MCF 10A (cell line): ENCODE measurements at regions of chr5 and their contacts with region 1.

Region 1: DNA sequence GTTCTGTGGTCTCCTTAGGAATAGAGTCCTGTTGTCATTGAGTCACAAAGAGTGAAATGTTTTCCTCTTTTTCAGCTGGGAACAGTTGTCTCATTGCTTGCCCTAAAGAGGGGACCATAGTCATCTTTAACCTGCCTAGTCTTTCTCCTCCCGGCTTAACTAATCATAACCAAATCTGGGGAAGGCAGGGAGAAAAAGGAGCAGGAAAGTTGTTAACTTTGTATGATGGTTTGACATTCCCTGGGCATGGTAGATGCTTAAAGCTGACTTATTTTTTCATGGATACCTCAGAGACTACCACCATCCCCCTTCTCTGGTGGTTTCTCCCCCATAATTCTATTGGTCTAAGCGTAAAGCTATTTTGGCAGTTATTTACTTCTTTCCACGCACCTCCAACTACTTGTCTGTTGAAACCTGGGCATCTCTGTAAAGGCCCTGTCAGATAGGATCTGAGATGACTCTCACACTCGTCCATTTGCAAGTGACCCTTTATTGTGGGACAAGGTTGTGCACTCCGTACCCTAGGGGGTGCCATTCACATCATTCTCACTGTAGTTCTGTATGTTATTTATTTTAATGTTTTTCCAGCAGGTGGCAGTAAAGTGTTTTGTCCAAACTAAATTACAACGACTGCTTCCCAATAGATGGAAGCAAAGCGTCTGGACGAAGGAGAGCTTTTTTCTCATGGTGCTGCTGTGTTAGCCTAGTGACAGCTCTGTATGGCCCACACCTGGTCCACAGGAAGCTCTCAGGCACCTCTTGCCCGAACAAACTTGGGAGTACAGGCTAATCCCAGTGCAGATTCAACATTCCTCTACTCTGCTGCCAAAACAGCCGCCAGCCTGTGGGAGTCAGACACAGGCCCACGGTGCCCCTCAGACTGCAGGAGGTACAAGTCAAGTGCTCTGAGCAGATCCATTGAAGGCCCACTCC is 3.0 kb upstream of the FAM13B start:
- DNase-seq: peak; percentile 96
- H3K4me3 Mint-ChIP-seq: no peak overlapping the region
- H3K27ac Mint-ChIP-seq: peak overlapping the region; percentile 4
- H3K4me1 Mint-ChIP-seq: peaks cover 26% of the 10 kb centered on the region
- H3K27me3 Mint-ChIP-seq: no peaks in the 10 kb centered on the region
- CTCF ChIP-seq: peak; percentile 93

Region 2: GRCh38 chr5:137778772-137779564 is 256.9 kb before region 1 on chr5:
- CTCF ChIA-PET with region 1: interaction called, 75 read pairs
- POLR2A ChIA-PET with region 1: interaction called, 4 read pairs
- intact Hi-C with region 1: loop called (anchors 1 kb)
- DNase-seq: peak; percentile 82
- H3K4me3 Mint-ChIP-seq: no peak overlapping the region
- H3K27ac Mint-ChIP-seq: no peak overlapping the region
- H3K4me1 Mint-ChIP-seq: no peaks in the 10 kb centered on the region
- H3K27me3 Mint-ChIP-seq: peaks cover 24% of the 10 kb centered on the region
- CTCF ChIP-seq: peak; percentile 86

Region 3: DNA sequence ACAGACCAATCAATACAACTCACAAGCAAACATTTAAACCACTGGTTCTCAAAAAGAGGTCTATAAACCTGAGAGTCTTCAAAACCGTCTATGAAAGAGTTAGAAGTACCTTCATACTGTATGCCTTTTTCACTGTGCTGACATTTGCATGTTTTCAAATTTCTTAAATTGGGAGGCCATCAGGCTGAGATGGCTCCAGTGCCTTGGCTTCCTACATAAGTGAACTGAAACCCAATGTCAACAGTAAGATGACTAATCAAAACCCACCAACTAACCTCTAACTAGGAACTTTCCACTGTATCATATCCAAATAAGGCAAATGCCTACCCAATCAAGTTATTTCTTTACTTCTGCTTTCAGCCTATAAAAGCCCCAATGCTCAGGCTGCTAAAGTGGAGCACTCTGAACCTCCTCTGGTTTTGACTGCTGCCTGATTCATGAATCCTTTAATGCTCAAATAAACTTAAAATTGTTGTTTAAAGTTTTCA is 38.1 kb before region 1 on chr5:
- CTCF ChIA-PET with region 1: interaction called, 10 read pairs
- POLR2A ChIA-PET with region 1: interaction called, 6 read pairs
- intact Hi-C with region 1: no loop called
- DNase-seq: peak; percentile 18
- H3K4me3 Mint-ChIP-seq: no peak overlapping the region
- H3K27ac Mint-ChIP-seq: no peak overlapping the region
- H3K4me1 Mint-ChIP-seq: peaks cover 26% of the 10 kb centered on the region
- H3K27me3 Mint-ChIP-seq: no peaks in the 10 kb centered on the region
- CTCF ChIP-seq: no peak

Region 4: DNA sequence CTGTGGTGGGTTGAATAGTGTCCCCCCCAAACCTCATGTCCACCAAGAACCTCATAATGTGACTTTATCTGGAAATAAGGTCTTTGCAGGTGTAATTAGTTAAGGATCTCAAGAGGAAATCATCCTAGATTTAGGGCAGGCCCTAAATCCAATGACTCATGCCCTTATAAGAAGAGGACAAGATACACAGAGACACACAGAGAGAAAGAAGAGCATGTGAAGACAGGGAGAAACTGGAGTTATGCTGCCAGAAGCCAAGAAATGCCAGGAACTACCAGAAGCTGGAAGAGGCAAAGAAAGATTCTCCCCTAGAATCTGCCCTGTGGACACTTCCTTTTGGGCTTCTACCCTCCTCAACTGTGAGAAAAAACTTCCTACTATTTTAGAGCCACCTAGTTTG is 11.8 kb before region 1 on chr5:
- CTCF ChIA-PET with region 1: interaction called, 28 read pairs
- POLR2A ChIA-PET with region 1: interaction called, 12 read pairs
- intact Hi-C with region 1: no loop called
- DNase-seq: peak; percentile 27
- H3K4me3 Mint-ChIP-seq: no peak overlapping the region
- H3K27ac Mint-ChIP-seq: peak overlapping the region; percentile 68
- H3K4me1 Mint-ChIP-seq: peaks cover 38% of the 10 kb centered on the region
- H3K27me3 Mint-ChIP-seq: no peaks in the 10 kb centered on the region
- CTCF ChIP-seq: no peak

Region 5: GRCh38 chr5:138077065-138077696 is 41.3 kb after region 1 on chr5:
- CTCF ChIA-PET with region 1: interaction called, 119 read pairs
- POLR2A ChIA-PET with region 1: interaction called, 4 read pairs
- intact Hi-C with region 1: no loop called
- DNase-seq: peak; percentile 82
- H3K4me3 Mint-ChIP-seq: no peak overlapping the region
- H3K27ac Mint-ChIP-seq: no peak overlapping the region
- H3K4me1 Mint-ChIP-seq: no peaks in the 10 kb centered on the region
- H3K27me3 Mint-ChIP-seq: no peaks in the 10 kb centered on the region
- CTCF ChIP-seq: peak; percentile 95

Region 6: GRCh38 chr5:138148811-138149210 is 112.9 kb after region 1 on chr5:
- CTCF ChIA-PET with region 1: interaction called, 26 read pairs
- POLR2A ChIA-PET with region 1: no interaction called
- intact Hi-C with region 1: no loop called
- DNase-seq: peak; percentile 94
- H3K4me3 Mint-ChIP-seq: no peak overlapping the region
- H3K27ac Mint-ChIP-seq: no peak overlapping the region
- H3K4me1 Mint-ChIP-seq: no peaks in the 10 kb centered on the region
- H3K27me3 Mint-ChIP-seq: no peaks in the 10 kb centered on the region
- CTCF ChIP-seq: no peak